Endothelial cell of umbilical vein (primary cell): ENCODE measurements at regions of chr17 and their contacts with region 1.

Region 1: DNA sequence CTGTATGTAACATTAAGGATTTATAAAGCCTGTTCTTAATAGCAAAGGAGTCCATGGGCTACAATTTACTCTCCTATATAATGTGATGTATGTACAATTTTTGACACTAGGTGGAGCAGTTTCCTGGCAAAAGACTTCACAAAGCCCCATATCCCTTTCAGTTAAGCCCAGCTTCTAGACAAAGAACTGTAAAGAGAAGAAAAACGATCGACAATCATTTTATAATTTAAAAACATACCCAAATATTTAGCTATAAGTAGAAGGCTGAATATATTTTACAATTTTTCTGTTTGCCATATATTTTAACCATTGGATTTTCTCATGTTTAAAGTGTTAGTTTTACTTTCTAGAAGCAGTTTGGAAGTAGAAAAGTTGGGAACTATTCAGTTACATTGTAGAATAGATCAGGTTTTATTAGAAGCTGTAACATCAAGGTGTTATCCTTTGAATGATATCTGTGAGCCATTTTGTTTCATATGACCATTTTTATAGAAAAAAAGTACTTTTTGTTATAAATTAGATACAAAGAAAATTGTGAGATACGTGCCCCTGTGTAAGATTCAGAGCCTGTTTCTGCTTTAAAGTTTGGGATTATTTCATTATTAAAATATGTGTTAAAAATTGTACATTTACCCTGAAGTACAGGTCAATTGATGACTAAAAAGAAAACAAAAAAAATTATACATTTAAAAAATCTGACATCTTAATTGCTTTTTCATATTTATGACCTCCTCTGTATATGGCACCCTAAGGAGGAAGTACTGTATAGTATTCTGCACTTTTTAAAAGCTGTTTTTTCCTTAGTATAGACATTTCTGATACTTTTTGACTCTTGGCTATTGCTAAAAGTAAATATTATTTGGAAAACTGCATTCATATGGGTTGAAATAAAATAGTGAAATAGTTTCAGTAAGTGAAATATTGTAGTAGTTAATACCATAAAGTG is 46.3 kb downstream of the VMP1 start:
- DNase-seq: peak; percentile 95
- H3K4me3 ChIP-seq: peak overlapping the region in 1 of 3 experiments; percentile 48
- H3K27ac ChIP-seq: peak overlapping the region; percentile 100
- H3K4me1 ChIP-seq: peaks cover 52% of the 10 kb centered on the region
- H3K27me3 ChIP-seq: no peaks in the 10 kb centered on the region
- CTCF ChIP-seq: peak; percentile 47
- POLR2A ChIP-seq: peak; percentile 22

Region 2: DNA sequence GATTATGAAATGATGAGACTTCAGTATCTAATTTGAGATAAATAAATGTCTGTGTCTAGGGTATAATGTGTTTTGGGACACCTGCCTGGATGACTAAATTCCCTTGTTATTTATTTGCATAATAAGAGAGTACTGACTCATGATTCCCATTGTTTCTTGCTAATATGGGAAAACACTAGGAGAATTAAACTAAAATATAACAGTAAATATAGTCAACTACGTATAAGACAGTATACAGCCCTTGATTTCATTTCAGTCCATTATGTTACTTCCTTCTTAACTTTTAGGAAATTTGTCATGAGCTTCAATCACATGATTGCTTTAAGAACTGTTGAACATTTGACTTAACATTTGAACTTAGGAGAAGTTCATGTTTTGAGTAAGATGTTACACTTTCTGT is 16.1 kb after region 1 on chr17:
- CTCF ChIA-PET with region 1: interaction called, 7 read pairs
- POLR2A ChIA-PET with region 1: no interaction called
- dilution Hi-C with region 1: no loop called
- intact Hi-C with region 1: loop called (anchors 1 kb)
- DNase-seq: peak; percentile 89
- H3K4me3 ChIP-seq: peak overlapping the region in 1 of 3 experiments; percentile 11
- H3K27ac ChIP-seq: peak overlapping the region; percentile 98
- H3K4me1 ChIP-seq: peaks cover 53% of the 10 kb centered on the region
- H3K27me3 ChIP-seq: no peaks in the 10 kb centered on the region
- CTCF ChIP-seq: no peak
- POLR2A ChIP-seq: no peak

Region 3: GRCh38 chr17:59786536-59787319 is 32.9 kb after region 1 on chr17:
- CTCF ChIA-PET with region 1: interaction called, 29 read pairs
- POLR2A ChIA-PET with region 1: interaction called, 21 read pairs
- dilution Hi-C with region 1: no loop called
- intact Hi-C with region 1: loop called (anchors 1 kb)
- DNase-seq: peak; percentile 98
- H3K4me3 ChIP-seq: peak overlapping the region in 1 of 3 experiments; percentile 25
- H3K27ac ChIP-seq: peak overlapping the region; percentile 98
- H3K4me1 ChIP-seq: peaks cover 61% of the 10 kb centered on the region
- H3K27me3 ChIP-seq: no peaks in the 10 kb centered on the region
- CTCF ChIP-seq: no peak
- POLR2A ChIP-seq: peak; percentile 53

Region 4: DNA sequence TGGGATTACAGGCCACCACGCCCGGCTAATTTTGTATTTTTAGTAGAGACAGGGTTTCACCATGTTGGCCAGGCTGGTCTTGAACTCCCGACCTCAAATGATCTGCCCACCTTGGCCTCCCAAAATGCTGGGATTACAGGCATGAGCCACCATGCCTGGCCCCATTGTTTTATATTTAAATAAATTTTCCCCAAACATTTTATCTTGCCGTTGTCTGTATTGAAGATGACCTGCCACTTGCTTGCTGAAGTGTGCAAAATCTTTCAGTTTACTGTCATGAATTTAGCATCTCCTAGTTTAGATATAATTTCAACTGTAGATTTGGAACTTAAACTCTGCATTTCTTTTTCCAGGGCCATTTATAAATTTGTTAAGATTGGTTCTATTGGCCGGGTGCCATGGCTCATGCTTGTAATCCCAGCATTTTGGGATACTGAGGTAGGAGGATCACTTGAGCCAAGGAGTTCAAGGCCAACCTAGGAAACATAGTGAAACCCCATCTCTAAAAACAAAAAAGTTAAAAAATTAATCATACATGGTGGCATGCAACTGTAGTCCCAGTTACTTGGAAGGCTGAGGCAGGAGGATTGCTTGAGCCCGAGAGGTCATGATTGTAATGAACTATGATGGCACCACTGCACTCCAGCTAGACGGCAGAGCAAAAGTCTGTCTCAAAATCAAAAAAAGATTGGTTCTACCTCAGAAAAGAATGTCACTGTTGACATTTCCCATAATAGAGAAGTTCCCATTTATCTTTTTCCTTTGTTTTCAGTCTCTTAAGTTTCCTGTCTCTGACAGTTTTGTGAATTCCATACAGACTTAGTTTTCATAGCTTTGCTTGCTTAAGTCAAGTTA is 38.0 kb after region 1 on chr17:
- CTCF ChIA-PET with region 1: interaction called, 29 read pairs
- POLR2A ChIA-PET with region 1: interaction called, 21 read pairs
- dilution Hi-C with region 1: no loop called
- intact Hi-C with region 1: loop called (anchors 1 kb)
- DNase-seq: peak; percentile 85
- H3K4me3 ChIP-seq: no peak overlapping the region
- H3K27ac ChIP-seq: peak overlapping the region; percentile 94
- H3K4me1 ChIP-seq: peaks cover 37% of the 10 kb centered on the region
- H3K27me3 ChIP-seq: no peaks in the 10 kb centered on the region
- CTCF ChIP-seq: no peak
- POLR2A ChIP-seq: no peak

Region 5: DNA sequence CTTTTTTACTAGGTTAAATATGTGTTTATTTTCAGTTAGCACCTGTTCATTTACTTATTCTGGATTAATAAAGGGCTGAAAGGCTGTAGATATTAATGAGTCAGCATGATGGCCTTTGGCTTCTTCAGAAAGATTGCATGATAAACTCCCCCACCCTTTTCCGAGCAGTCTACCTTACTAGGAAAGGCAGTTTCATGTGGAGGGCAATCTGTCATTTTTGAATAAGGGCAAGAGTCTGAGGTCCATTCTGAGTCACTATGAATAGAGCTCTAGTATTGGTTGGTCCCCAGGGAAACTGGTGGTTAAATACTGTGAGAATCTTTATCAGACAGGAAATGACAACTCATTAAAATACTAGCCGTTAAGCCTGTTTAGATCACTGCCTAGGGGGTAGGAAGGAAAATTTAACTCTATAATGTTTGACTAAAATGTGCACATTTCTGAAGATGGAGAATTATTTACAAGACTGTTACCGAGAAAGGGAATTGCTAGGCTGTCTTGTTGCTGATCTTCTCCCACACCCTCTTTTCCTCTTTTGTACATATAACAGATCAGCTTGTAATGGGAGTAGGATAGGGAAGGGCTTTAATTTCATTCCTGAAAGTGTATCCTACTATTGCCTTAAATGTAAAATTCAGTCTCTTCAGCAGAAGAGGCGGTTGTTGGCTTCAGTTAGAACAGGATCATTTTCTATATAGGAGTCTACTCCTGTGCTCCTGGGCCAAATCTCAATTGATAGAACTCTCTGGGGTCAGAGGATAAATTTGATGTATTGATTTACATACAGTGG is 75.6 kb after region 1 on chr17:
- CTCF ChIA-PET with region 1: interaction called, 31 read pairs
- POLR2A ChIA-PET with region 1: interaction called, 10 read pairs
- dilution Hi-C with region 1: no loop called
- intact Hi-C with region 1: loop called (anchors 1 kb)
- DNase-seq: peak; percentile 99
- H3K4me3 ChIP-seq: peak overlapping the region in 1 of 3 experiments; percentile 28
- H3K27ac ChIP-seq: peak overlapping the region; percentile 97
- H3K4me1 ChIP-seq: peaks cover 32% of the 10 kb centered on the region
- H3K27me3 ChIP-seq: no peaks in the 10 kb centered on the region
- CTCF ChIP-seq: no peak
- POLR2A ChIP-seq: peak; percentile 15

Region 6: DNA sequence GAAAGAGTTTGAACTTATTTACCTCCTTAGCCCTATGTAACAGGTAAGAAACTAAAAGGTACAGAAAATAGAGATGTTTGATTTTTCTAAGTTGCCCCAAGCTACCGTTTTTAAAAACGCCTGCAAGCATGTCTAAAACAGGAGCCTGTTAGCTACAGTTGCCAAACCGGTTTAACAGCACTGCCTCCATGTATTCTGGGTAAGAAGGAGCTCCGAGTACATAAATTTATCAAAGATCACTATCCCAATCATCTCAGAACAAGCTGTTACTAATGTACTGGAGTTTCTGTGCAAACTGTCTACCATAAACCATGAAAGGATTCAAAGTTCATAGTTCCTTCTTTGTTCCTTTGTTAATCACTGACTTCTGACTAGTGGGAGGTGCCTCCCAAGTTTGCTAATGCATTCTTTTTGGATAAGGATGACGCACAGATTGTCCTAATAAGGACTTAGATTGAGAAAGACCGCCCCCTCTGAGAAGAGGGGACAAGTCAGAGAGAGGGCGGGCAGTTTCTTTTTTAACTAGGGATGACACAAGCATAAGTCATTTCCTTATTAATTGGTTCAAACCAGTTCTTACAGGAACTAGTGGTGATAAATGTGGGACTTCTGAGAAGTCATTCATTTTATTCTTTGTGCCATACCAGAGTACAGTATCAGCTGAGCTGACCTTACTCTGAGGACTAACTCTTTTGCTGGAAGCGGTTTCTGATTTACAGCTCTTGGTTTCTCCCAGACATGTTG is 83.7 kb after region 1 on chr17:
- CTCF ChIA-PET with region 1: interaction called, 110 read pairs
- POLR2A ChIA-PET with region 1: interaction called, 224 read pairs
- dilution Hi-C with region 1: no loop called
- intact Hi-C with region 1: loop called (anchors 1 kb)
- DNase-seq: peak; percentile 99
- H3K4me3 ChIP-seq: peak overlapping the region; percentile 76 to 100 (median 99)
- H3K27ac ChIP-seq: peak overlapping the region; percentile 100
- H3K4me1 ChIP-seq: peaks cover 13% of the 10 kb centered on the region
- H3K27me3 ChIP-seq: no peaks in the 10 kb centered on the region
- CTCF ChIP-seq: no peak
- POLR2A ChIP-seq: peak; percentile 100

Region 7: GRCh38 chr17:59846394-59847165 is 92.8 kb after region 1 on chr17:
- CTCF ChIA-PET with region 1: interaction called, 110 read pairs
- POLR2A ChIA-PET with region 1: interaction called, 224 read pairs
- dilution Hi-C with region 1: no loop called
- intact Hi-C with region 1: loop called (anchors 1 kb)
- DNase-seq: peak; percentile 74
- H3K4me3 ChIP-seq: no peak overlapping the region
- H3K27ac ChIP-seq: peak overlapping the region; percentile 10
- H3K4me1 ChIP-seq: peaks cover 10% of the 10 kb centered on the region
- H3K27me3 ChIP-seq: no peaks in the 10 kb centered on the region
- CTCF ChIP-seq: no peak
- POLR2A ChIP-seq: no peak